ENCODE measurements at regions of chr2 and their contacts with region 1.

Region 1: GRCh38 chr2:12416600-12416999 is 300.1 kb upstream of the TRIB2 start:
- DNase-seq: peak; percentile 40 to 86 (median 65)
- ATAC-seq: peak; percentile 78
- H3K4me3 ChIP-seq: no peak overlapping the region
- H3K4me3 Mint-ChIP-seq: peak overlapping the region; percentile 5
- H3K27ac ChIP-seq: no peak overlapping the region
- H3K27ac Mint-ChIP-seq: peak overlapping the region; percentile 50
- H3K4me1 ChIP-seq: peaks cover 27% of the 10 kb centered on the region
- H3K4me1 Mint-ChIP-seq: peaks cover 64% of the 10 kb centered on the region
- H3K27me3 ChIP-seq: no peaks in the 10 kb centered on the region
- H3K27me3 Mint-ChIP-seq: no peaks in the 10 kb centered on the region
- CTCF ChIP-seq: peak; percentile 79

Region 2: DNA sequence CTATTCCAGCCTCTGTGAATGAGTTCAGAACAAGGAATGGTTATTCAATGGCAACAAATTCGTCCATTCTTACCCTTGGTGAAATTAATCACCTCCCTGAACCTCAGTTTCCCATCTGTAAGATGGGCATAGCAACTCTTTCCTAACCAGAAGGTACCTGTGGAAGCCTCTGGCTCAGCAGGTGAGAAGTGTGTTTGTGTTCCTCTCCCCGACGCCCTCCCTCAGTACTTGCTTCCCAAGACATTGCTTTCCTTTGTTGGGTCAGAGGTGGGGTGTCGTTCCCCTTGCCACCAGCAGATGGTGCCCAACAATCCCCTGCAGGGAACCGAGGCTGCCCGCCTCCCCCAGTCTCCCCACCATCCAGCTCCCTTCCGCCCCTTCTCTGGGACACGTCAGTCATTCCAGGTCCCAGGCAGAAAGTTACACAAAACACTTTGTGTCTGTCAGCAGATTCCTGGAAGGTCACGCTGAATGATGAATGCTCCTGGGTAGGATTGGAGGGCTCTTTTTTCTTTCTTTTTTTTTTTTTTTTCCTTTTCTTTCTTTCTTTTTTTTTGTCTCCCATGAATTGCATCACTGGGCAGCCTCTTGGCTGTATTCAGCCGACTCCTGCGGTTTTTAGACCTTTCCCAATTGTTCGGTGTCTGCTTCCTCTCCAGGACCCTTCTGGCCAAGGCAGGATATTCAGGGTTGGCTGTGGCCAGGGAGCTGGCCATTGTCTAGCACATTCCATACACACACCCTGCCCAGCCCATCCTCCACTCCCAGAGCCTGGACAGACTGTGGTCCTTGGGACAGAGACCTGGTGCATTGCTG is 552.9 kb before region 1 on chr2:
- CTCF ChIA-PET with region 1: no interaction called
- POLR2A ChIA-PET with region 1: no interaction called
- intact Hi-C with region 1: loop called in 1 of 2 experiments (anchors 5 kb)
- DNase-seq: peak; percentile 50 to 86 (median 58)
- ATAC-seq: peak; percentile 83
- H3K4me3 ChIP-seq: peak overlapping the region; percentile 24
- H3K4me3 Mint-ChIP-seq: peak overlapping the region; percentile 18
- H3K27ac ChIP-seq: no peak overlapping the region
- H3K27ac Mint-ChIP-seq: no peak overlapping the region
- H3K4me1 ChIP-seq: peaks cover 15% of the 10 kb centered on the region
- H3K4me1 Mint-ChIP-seq: peaks cover 18% of the 10 kb centered on the region
- H3K27me3 ChIP-seq: no peaks in the 10 kb centered on the region
- H3K27me3 Mint-ChIP-seq: no peaks in the 10 kb centered on the region
- CTCF ChIP-seq: peak; percentile 97

Region 3: DNA sequence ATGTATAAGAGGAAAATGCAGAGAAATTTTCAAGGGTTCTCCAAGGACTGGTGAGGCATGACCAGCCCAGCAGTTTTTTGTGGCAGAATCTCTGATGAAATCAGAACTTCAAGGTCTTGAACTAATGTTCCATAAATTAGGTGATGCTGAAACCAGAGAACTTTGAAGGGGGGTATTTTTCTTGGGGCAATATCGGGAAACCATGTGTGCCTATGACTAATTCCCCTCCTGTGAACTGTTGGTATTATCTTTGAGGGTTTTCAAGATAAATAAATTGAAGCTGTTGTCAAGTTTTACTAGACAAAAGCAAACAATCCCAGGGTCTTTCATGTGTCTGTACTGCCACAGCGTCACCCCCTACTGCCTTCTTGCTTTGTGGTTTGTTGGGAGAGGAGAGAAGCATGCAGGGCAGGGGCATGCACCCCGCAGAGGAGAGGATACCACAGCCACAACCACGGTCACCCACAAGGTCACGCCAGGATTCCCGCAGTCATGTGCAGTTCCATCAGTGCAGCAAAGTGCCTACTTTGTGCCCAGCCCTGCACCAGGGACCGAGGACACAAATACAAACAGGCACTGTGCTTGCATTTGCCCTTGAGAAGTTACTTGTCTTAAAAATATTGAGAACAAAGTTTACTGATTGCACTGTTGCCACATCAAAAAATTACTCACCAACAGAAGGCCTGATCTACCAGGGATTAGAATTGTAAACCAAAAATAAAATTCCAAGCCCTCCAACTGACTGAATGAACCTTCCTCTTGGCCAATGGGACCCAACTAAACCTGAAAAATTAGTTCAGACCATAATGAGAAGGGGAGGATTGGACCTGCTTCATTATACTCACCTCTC is 113.2 kb before region 1 on chr2:
- CTCF ChIA-PET with region 1: no interaction called
- POLR2A ChIA-PET with region 1: no interaction called
- intact Hi-C with region 1: no loop called
- DNase-seq: peak in 7 of 14 experiments; percentile 3 to 34 (median 9)
- ATAC-seq: peak; percentile 53
- H3K4me3 ChIP-seq: no peak overlapping the region
- H3K4me3 Mint-ChIP-seq: no peak overlapping the region
- H3K27ac ChIP-seq: no peak overlapping the region
- H3K27ac Mint-ChIP-seq: peak overlapping the region; percentile 41
- H3K4me1 ChIP-seq: peaks cover 27% of the 10 kb centered on the region
- H3K4me1 Mint-ChIP-seq: peaks cover 45% of the 10 kb centered on the region
- H3K27me3 ChIP-seq: no peaks in the 10 kb centered on the region
- H3K27me3 Mint-ChIP-seq: no peaks in the 10 kb centered on the region
- CTCF ChIP-seq: no peak

Region 4: DNA sequence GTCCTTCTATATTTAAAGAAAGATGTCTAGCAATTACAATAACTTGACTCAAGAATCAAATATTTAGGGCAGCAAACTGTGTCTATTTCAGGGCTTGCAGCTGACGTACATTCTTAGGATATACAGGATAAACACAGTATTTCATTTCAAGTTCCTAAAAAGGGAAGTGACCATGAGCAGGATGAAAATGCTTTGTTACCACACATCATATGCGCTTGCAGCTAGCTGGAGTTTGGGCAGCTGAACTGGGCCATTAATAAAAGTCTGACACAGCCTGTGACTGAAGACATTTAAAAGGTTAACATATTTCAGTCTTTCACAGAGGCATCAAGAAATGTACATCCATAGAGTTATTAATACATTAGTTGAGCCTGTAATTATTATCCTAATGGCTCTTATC is 35.6 kb after region 1 on chr2:
- CTCF ChIA-PET with region 1: no interaction called
- POLR2A ChIA-PET with region 1: no interaction called
- intact Hi-C with region 1: no loop called
- DNase-seq: peak in 2 of 14 experiments; percentile 19 to 20
- ATAC-seq: no peak
- H3K4me3 ChIP-seq: peak overlapping the region; percentile 23
- H3K4me3 Mint-ChIP-seq: peak overlapping the region; percentile 55
- H3K27ac ChIP-seq: peak overlapping the region in 1 of 2 donors; percentile 67
- H3K27ac Mint-ChIP-seq: peak overlapping the region; percentile 75
- H3K4me1 ChIP-seq: peaks cover 19% of the 10 kb centered on the region
- H3K4me1 Mint-ChIP-seq: peaks cover 54% of the 10 kb centered on the region
- H3K27me3 ChIP-seq: no peaks in the 10 kb centered on the region
- H3K27me3 Mint-ChIP-seq: no peaks in the 10 kb centered on the region
- CTCF ChIP-seq: no peak

Region 5: DNA sequence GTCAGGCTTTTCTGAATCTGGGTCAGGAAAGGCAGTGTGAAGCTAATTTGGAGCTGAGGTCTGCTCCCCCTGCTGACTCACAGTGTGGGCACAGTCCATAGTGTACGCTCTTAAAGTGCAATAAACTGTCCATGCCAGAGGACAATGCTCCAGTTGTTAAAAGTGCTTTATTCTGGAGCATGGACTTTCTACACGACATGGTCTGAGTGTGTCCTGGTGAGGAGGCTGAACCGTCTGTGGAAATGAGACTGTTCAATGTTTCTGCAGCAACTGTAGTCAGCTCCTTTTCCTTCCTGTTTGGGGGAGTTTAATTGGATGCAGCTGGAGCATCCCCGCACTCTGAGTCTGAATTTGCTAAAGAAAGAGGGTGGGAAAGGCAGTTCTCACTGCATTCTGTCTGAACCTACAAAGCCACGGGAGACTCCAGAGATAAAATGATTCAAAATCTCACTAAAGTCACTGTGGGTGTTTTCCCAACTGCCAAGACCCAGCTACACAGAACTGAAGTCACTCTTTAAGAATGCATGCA is 189.9 kb after region 1 on chr2:
- CTCF ChIA-PET with region 1: no interaction called
- POLR2A ChIA-PET with region 1: no interaction called
- intact Hi-C with region 1: loop called in 1 of 2 experiments (anchors 5 kb)
- DNase-seq: peak in 4 of 14 experiments; percentile 27 to 44 (median 33)
- ATAC-seq: no peak
- H3K4me3 ChIP-seq: no peak overlapping the region
- H3K4me3 Mint-ChIP-seq: no peak overlapping the region
- H3K27ac ChIP-seq: no peak overlapping the region
- H3K27ac Mint-ChIP-seq: no peak overlapping the region
- H3K4me1 ChIP-seq: peaks cover 6% of the 10 kb centered on the region
- H3K4me1 Mint-ChIP-seq: peaks cover 24% of the 10 kb centered on the region
- H3K27me3 ChIP-seq: no peaks in the 10 kb centered on the region
- H3K27me3 Mint-ChIP-seq: no peaks in the 10 kb centered on the region
- CTCF ChIP-seq: no peak

Region 6: GRCh38 chr2:13905831-13906230 is 1489.2 kb after region 1 on chr2:
- CTCF ChIA-PET with region 1: no interaction called
- POLR2A ChIA-PET with region 1: no interaction called
- intact Hi-C with region 1: no loop called
- DNase-seq: no peak
- ATAC-seq: no peak
- H3K4me3 ChIP-seq: no peak overlapping the region
- H3K4me3 Mint-ChIP-seq: no peak overlapping the region
- H3K27ac ChIP-seq: no peak overlapping the region
- H3K27ac Mint-ChIP-seq: no peak overlapping the region
- H3K4me1 ChIP-seq: no peaks in the 10 kb centered on the region
- H3K4me1 Mint-ChIP-seq: no peaks in the 10 kb centered on the region
- H3K27me3 ChIP-seq: no peaks in the 10 kb centered on the region
- H3K27me3 Mint-ChIP-seq: no peaks in the 10 kb centered on the region
- CTCF ChIP-seq: no peak

Measured in CD4-positive, alpha-beta T cell (primary cell).